ENCODE measurements at regions of chr2 and their contacts with region 1.

Region 1: DNA sequence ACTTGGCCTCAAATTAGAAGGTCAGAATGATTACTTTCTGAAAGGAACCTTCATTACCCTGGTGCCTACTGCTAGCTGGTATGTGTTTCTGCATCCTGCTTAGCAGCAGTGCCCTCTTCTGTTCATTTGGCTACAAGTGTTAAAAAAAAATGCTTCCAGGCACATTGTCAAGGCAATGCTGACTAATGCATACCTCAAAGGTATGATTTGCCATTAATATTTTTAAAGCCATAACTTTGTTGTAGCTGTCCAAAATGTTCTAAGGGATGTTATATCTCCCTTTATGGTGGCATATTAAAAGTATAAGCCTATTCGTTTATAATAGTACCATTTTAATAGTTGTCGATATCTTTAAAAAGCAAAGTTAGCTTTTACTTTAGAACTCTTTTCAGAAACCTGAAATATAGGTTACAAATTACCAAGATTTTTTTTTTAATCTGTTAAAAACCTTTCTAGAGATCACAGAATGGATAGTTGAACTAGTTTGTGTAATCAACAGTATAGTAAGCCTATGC is 52.0 kb upstream of the FAM171B start:
- DNase-seq: peak; percentile 25
- H3K4me3 ChIP-seq: no peak overlapping the region
- H3K27ac ChIP-seq: no peak overlapping the region
- H3K4me1 ChIP-seq: no peaks in the 10 kb centered on the region
- H3K27me3 ChIP-seq: no peaks in the 10 kb centered on the region
- CTCF ChIP-seq: peak; percentile 63

Region 2: DNA sequence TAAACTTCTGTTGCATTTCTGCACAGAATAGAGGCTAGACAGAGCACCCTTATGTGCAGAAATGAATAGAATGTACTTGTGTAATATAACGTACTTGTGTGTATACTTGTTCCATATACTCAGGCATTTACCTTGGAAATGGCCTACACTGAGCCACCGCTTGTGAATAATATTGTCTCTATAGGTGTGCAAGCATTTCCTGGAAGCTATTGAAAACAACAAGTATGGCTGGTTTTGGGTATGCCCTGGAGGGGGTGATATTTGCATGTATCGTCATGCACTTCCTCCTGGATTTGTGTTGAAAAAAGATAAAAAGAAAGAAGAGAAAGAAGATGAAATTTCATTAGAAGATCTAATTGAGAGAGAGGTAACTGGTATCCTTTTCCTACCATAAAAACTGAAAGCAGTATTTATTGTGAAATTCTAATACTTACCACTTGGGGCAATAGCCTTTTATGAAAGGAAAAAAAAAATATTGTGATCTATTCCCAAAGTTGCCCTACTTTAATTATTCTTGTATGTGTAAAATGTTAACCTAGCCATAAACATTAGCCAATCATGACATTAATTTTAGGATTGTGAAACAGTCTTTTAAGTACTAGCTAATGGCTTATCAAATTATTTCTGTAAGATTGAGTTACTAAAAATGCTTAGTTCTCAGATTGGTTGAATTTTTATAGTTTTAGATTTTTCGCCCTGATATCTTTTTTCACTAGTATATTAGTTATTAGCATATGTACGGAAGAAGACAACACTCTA is 137.8 kb before region 1 on chr2:
- intact Hi-C with region 1: loop called (anchors 2 kb)
- DNase-seq: no peak
- H3K4me3 ChIP-seq: no peak overlapping the region
- H3K27ac ChIP-seq: no peak overlapping the region
- H3K4me1 ChIP-seq: no peaks in the 10 kb centered on the region
- H3K27me3 ChIP-seq: no peaks in the 10 kb centered on the region
- CTCF ChIP-seq: peak; percentile 43

Region 3: GRCh38 chr2:186605041-186605440 is 36.8 kb before region 1 on chr2:
- intact Hi-C with region 1: no loop called
- DNase-seq: no peak
- H3K4me3 ChIP-seq: no peak overlapping the region
- H3K27ac ChIP-seq: no peak overlapping the region
- H3K4me1 ChIP-seq: no peaks in the 10 kb centered on the region
- H3K27me3 ChIP-seq: no peaks in the 10 kb centered on the region
- CTCF ChIP-seq: no peak

Region 4: GRCh38 chr2:186751790-186752189 is 109.9 kb after region 1 on chr2:
- intact Hi-C with region 1: no loop called
- DNase-seq: no peak
- H3K4me3 ChIP-seq: no peak overlapping the region
- H3K27ac ChIP-seq: no peak overlapping the region
- H3K4me1 ChIP-seq: no peaks in the 10 kb centered on the region
- H3K27me3 ChIP-seq: no peaks in the 10 kb centered on the region
- CTCF ChIP-seq: no peak

Region 5: GRCh38 chr2:186761814-186762213 is 120.0 kb after region 1 on chr2:
- intact Hi-C with region 1: no loop called
- DNase-seq: no peak
- H3K4me3 ChIP-seq: no peak overlapping the region
- H3K27ac ChIP-seq: no peak overlapping the region
- H3K4me1 ChIP-seq: no peaks in the 10 kb centered on the region
- H3K27me3 ChIP-seq: no peaks in the 10 kb centered on the region
- CTCF ChIP-seq: no peak